ENCODE measurements at regions of chr6 and their contacts with region 1.

Region 1: DNA sequence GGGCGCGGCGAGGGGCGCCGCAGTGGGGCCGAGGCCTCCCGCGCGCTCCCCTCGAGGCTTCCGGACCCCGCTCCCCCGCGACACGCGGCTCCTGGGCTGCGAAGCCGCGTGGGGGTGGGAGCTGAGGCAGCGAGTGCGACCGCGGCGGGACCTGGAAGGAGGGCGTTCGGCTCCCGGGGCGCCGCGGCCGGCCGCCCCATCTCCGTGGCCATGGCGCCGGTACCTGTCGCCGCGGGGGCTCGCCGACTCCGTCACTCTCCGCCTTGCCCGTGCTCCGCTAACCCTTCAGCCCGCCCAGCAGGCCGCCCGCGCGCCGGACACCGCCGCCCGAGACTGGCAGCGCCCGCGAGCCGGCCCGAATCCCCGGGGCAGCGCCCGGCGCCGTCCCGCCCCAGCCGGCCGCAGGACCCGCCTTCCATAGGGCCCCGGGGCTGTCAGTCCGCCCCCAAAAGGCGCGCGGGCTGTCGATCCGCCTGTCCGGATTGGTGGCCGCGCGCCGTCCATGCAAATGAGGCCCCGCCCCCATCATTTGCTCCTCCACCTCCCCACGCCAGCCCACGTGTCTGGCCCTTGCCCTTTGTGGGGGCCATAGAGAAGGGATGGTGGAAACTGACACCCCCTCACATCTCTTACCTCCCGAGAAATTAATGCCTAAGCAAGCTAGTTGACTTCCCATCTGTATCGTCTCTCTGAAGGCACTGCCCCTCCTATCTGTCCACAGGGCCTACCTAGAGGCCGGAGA is at the start of gene FKBP5:
- DNase-seq: peak; percentile 95 to 98 (median 97)
- H3K4me3 ChIP-seq: peak within 1 kb of the TSS; percentile 91
- H3K27ac ChIP-seq: peak within 1 kb of the TSS; percentile 90 to 92
- H3K4me1 ChIP-seq: peaks cover 10% of the 10 kb centered on the region
- H3K27me3 ChIP-seq: no peaks in the 10 kb centered on the region
- CTCF ChIP-seq: no peak
- EP300 ChIP-seq: no peak
- POLR2A ChIP-seq: peak; percentile 90
- total RNA-seq, gene FKBP5: 36.2 to 231 (median 142) TPM

Region 2: GRCh38 chr6:35583893-35584688 is 104.7 kb before region 1 on chr6:
- intact Hi-C with region 1: loop called in 1 of 4 experiments (anchors 10 kb)
- DNase-seq: peak in 4 of 5 donors; percentile 60 to 83 (median 72)
- H3K4me3 ChIP-seq: no peak overlapping the region
- H3K27ac ChIP-seq: no peak overlapping the region
- H3K4me1 ChIP-seq: peaks cover 5% of the 10 kb centered on the region
- H3K27me3 ChIP-seq: no peaks in the 10 kb centered on the region
- CTCF ChIP-seq: peak; percentile 77 to 89 (median 85)
- EP300 ChIP-seq: no peak
- POLR2A ChIP-seq: no peak

Region 3: DNA sequence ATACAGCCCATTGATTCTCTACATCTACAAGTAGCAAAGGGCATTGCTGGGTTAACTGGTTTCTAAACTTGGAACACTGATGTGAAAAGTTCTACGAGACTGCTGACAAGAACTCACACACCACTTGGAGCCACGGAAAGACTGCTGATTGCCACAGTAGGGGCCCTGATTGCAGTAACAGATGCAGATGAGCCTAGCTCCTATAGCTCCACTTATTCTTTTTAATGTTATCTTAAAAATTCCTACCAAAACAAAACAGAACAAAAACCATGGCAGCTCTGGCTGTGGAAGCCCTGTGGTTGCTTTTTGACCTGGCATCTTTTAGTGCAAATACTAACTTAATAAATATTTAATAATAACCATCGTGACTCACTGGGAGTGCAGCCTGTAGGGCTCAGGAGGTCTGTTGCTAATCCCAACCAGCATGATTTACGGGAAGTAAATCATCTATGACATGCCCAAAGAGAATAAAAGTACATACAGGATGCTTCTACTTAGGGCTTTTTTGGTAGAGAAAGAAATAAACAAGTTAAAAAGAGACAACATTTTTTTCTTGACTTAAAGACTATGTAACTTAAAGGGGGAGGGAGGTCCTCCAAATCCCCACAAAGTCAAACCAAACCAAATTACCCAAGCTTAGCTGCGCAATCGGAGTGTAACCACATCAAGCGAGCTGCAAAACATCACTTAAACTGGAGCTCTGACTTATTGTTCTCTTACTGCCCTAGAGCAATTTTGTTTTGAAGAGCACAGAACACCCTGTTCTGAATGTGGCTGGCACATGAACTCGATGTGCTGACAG is 87.2 kb before region 1 on chr6:
- intact Hi-C with region 1: loop called in 2 of 4 experiments (anchors 5 kb)
- DNase-seq: peak in 4 of 5 donors; percentile 15 to 76 (median 51)
- H3K4me3 ChIP-seq: peak overlapping the region; percentile 4
- H3K27ac ChIP-seq: peak overlapping the region; percentile 62 to 86
- H3K4me1 ChIP-seq: peaks cover 28% of the 10 kb centered on the region
- H3K27me3 ChIP-seq: no peaks in the 10 kb centered on the region
- CTCF ChIP-seq: no peak
- EP300 ChIP-seq: peak; percentile 99
- POLR2A ChIP-seq: no peak

Region 4: DNA sequence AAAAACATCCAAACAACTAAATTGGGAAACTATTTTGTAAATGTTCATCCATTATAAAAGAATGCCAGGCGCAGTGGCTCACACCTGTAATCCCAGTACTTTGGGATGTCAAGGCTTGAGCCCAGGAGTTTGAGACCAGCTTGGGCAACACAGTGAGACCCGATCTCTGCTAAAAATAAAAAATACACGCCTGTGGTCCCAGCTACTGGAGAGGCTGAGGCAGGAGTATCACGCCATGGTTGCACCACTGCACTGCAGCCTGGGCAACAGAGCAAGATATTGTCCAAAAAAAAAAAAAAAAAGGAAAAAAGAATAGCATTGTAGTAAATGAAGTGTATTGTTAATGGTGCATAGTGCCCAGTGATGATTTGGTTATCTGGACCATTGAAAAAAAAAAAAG is 38.7 kb before region 1 on chr6:
- intact Hi-C with region 1: no loop called
- DNase-seq: no peak
- H3K4me3 ChIP-seq: no peak overlapping the region
- H3K27ac ChIP-seq: no peak overlapping the region
- H3K4me1 ChIP-seq: peaks cover 3% of the 10 kb centered on the region
- H3K27me3 ChIP-seq: no peaks in the 10 kb centered on the region
- CTCF ChIP-seq: no peak
- EP300 ChIP-seq: no peak
- POLR2A ChIP-seq: no peak

Region 5: GRCh38 chr6:35931120-35931561 is 242.4 kb after region 1 on chr6:
- intact Hi-C with region 1: no loop called
- DNase-seq: no peak
- H3K4me3 ChIP-seq: no peak overlapping the region
- H3K27ac ChIP-seq: no peak overlapping the region
- H3K4me1 ChIP-seq: no peaks in the 10 kb centered on the region
- H3K27me3 ChIP-seq: no peaks in the 10 kb centered on the region
- CTCF ChIP-seq: no peak
- EP300 ChIP-seq: no peak
- POLR2A ChIP-seq: no peak

Region 6: GRCh38 chr6:35977308-35977707 is 288.6 kb after region 1 on chr6:
- intact Hi-C with region 1: no loop called
- DNase-seq: no peak
- H3K4me3 ChIP-seq: no peak overlapping the region
- H3K27ac ChIP-seq: no peak overlapping the region
- H3K4me1 ChIP-seq: no peaks in the 10 kb centered on the region
- H3K27me3 ChIP-seq: no peaks in the 10 kb centered on the region
- CTCF ChIP-seq: no peak
- EP300 ChIP-seq: no peak
- POLR2A ChIP-seq: no peak

Measured in ovary (tissue), 10 donors.